GM18951 (cell line): ENCODE measurements at regions of chr4 and their contacts with region 1.

Region 1: GRCh38 chr4:99875072-99875471 is 19.2 kb downstream of the LAMTOR3 start:
- POLR2A ChIP-seq: no peak

Region 2: DNA sequence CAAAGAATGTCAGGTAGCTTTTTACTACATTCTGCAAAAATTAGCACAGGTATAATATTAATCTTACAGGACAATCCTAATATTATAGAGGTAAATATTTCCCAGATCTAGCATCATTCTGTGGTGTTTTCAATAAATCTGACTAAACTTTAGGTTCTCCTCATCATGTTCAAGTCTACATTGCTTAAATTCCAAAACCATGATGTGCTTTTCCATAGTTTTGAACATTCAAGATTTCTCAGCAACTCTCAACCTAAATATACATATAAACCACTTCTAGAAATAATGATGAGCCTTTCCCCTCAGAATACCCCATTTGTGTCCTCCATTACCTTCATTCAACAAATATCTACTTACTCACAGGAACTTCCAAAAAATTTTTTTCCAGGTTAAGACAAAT is 969.2 kb before region 1 on chr4:
- in situ Hi-C with region 1: no loop called
- POLR2A ChIP-seq: no peak

Region 3: GRCh38 chr4:99811850-99812249 is 63.2 kb before region 1 on chr4:
- in situ Hi-C with region 1: loop called (anchors 5 kb)
- POLR2A ChIP-seq: no peak